Lower leg skin (tissue), 4 donors: ENCODE measurements at regions of chr11 and their contacts with region 1.

Region 1: GRCh38 chr11:59802639-59803176 is 7.9 kb downstream of the MRPL16 start:
- DNase-seq: peak in 1 of 2 donors; percentile 49
- H3K4me3 ChIP-seq: no peak overlapping the region
- CTCF ChIP-seq: no peak
- POLR2A ChIP-seq: no peak

Region 2: DNA sequence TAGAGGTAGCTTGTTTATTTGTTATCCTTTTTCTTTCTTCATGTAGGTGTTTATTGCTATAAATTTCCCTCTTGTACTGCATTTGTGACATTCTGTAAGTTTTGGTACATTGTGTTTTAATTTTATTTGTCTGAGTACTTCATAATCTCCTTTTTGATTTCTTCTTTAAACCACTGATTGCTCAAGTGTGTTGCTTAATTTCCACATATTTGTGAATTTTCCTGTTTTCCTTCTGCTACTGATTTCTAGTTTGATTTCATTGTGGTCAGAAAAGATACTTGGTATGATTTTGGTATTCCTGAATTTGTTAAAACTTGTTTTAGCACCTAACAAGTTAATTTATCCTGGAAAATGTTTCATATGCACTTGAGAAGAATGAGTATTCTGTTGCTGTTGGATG is 104.2 kb before region 1 on chr11:
- intact Hi-C with region 1: loop called (anchors 10 kb)
- DNase-seq: no peak
- H3K4me3 ChIP-seq: no peak overlapping the region
- CTCF ChIP-seq: no peak
- POLR2A ChIP-seq: no peak

Region 3: GRCh38 chr11:59728913-59729312 is 73.8 kb before region 1 on chr11:
- intact Hi-C with region 1: no loop called
- DNase-seq: no peak
- H3K4me3 ChIP-seq: no peak overlapping the region
- CTCF ChIP-seq: no peak
- POLR2A ChIP-seq: no peak

Region 4: DNA sequence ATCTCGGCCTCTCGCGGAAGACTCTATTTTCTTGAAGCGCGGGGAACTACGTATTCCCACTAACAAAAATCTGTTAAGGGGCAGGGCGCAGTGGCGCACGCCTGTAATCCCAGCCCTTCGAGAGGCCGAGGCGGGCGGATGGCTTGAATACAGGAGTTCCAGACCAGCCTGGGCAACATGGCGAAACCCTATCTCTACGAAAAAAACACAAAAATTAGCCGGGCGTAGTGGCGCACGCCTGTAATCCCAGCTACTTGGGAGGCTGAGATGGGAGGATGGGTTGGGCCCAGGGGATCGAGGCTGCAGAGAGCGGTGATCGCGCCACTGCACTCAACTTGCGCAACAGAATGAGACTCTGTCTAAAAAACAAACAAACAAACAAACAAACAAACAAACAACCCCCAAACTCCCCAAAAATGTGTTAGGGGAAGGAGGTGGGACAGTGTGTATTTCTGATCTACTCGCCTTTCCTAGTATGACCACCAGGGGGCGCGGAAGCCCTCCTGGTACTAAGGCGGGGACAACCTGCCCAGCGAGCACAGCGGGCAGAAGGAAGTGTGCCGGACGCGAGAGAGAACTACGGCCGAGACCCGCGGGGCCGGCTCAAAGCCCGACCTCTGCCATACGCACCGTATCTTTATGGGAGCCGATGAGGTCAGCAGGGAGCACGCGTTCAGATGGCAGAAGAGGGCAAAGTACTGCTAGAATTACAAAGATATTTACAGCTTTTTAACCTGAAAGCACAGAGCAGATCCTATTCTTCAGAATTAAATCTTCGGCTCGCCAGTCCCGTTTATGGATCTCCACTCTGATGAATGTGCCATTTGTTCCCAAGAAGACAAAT is 48.8 kb before region 1 on chr11:
- intact Hi-C with region 1: loop called (anchors 5 kb)
- DNase-seq: peak; percentile 88 to 97
- H3K4me3 ChIP-seq: peak overlapping the region; percentile 72
- CTCF ChIP-seq: peak in 1 of 3 donors; percentile 94
- POLR2A ChIP-seq: no peak

Region 5: DNA sequence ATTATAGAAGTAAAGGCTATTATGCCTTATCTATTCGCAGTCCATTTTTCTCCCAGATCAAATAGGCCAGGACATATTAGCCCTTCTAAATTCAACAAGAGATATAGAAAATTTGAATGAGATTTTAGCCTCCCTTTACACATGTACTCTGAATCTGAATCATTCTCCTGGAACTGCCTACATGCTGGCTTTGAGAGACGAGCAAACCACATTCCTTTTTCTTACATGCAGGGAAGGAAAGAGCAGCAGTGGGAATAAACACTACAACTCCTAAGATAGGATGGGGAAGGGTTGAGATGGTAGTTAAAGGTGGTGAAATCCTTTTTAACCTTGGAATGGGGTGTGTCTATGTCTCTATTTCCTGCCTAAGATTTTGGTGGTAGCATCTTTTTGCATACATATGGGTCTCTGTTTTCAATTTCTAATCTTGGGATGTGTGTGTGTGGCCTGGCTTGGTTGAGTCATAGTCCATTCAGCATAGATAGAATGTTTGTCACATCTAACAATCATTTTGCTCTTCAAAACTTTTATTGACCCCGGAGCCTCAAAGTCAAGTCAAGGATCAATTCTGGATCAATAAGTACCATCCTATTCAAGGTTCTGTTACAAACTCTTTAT is 226.4 kb after region 1 on chr11:
- intact Hi-C with region 1: no loop called
- DNase-seq: no peak
- H3K4me3 ChIP-seq: no peak overlapping the region
- CTCF ChIP-seq: no peak
- POLR2A ChIP-seq: no peak